GM13977 (cell line): ENCODE measurements at regions of chr1 and their contacts with region 1.

Region 1: DNA sequence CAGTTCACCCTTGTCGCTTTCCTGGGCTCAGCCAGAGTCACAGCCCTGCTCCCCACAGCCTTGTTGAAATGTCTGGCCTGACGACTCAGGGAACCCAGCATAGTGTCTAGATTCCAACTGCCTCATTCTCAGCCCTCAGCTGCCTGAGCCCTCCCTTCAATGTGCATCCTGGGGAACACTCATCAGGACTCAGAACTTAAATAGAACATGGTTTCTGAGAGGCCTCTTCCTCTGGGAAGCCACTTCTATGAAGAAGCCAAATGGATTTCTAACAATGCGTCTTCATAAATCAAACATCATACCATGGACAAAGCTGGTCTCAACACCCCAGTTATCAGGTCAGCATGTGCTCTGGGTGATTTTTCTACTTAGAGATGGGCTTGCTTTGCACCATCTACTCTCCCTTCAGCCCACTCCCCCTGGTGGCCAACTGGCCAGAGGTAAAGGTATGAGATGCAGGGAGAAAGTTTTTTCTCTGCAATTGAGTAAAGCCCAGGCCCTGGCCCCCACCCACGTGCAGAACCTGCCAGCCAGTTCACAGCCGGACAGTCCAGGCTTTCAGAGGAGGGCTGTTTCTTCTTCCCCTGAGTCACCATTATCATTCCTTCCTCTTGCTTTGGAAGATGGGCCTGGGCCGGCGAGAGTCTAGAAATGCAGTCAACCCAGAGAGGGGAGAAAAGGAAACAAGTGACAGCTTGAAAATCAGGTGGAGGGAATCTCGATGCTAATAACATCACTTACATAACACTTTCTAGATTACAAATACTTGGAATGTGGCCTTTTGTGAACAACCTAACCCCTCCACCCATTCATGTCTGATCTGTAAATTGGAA is 32.1 kb downstream of the CD244 start:
- DNase-seq: peak; percentile 53
- CTCF ChIP-seq: peak; percentile 81

Region 2: DNA sequence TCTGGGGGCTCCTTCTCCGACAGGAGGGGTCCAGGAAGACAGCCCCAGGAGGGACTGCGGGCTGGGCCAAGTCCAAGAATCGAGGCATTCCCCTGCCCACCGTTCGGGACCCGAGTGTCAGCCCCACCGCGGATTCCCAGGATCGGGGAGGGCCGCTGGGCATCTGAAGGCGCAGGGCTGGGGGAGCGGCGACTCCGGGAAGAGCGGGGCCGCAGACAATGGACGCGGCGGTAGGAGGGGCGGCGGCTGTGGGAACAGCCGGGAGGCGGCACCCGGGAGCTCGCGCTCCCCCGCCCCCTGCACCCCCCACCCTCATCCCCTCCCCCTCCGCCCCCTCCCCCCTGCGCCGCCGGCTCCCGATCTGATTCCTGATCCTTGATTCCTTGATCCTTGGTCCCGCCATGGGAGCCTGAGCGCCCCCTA is 430.3 kb before region 1 on chr1 and contains the start of gene VANGL2:
- in situ Hi-C with region 1: loop called (anchors 25 kb)
- DNase-seq: peak; percentile 76
- CTCF ChIP-seq: no peak

Region 3: DNA sequence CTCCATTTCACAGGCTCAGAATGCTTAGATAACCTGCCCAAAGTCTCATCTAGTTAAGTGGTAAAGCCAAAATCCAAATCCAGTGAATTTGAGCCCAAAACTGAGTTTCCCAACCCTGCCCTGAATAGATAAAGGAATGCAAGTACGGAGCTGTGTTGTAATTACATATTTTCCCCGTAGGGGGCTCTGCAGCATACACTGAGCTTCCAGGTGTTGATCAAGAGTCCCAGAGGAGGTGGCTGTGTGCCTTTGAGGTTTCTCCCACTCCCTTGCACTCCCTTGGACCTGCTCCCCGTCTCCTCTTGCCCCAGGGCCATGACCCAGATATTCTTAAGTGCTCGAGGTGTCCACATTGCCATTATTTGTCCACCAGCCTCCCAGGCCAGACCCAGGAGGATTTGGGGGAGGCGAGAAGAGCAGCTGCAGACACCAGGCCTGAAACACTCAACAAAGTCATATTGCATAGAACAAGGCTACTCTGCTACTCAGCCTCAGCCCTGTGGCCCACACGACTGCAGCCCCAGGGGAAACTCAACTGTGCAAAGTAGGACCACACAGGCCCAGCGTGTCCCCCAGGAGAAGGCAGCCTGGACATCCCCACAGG is 52.9 kb before region 1 on chr1:
- in situ Hi-C with region 1: loop called (anchors 10 kb)
- DNase-seq: peak; percentile 39
- CTCF ChIP-seq: peak; percentile 75

Region 4: DNA sequence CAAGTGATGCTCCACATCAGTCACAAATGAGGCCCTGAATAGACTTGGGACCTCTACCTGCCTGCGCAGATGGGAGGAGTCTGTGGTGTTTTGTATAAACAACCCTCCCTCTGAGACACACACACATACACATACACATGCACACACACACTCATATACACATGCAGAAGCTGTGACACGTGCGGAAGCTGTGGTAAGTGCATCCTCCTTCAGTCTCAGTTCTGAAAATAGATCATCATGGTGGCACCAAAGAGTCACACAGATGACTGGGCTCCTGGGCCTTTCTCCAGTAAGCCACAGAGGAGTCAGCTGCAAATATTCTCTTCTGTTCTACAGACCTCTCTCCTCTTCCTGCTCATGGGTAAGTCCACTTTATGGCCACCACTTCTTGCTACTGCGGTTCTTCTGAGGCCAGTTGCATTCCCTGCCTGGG is 34.6 kb before region 1 on chr1 and contains the start of gene LY9:
- in situ Hi-C with region 1: loop called (anchors 5 kb)
- DNase-seq: peak; percentile 72
- CTCF ChIP-seq: no peak